ENCODE measurements at regions of chr6 and their contacts with region 1.

Region 1: DNA sequence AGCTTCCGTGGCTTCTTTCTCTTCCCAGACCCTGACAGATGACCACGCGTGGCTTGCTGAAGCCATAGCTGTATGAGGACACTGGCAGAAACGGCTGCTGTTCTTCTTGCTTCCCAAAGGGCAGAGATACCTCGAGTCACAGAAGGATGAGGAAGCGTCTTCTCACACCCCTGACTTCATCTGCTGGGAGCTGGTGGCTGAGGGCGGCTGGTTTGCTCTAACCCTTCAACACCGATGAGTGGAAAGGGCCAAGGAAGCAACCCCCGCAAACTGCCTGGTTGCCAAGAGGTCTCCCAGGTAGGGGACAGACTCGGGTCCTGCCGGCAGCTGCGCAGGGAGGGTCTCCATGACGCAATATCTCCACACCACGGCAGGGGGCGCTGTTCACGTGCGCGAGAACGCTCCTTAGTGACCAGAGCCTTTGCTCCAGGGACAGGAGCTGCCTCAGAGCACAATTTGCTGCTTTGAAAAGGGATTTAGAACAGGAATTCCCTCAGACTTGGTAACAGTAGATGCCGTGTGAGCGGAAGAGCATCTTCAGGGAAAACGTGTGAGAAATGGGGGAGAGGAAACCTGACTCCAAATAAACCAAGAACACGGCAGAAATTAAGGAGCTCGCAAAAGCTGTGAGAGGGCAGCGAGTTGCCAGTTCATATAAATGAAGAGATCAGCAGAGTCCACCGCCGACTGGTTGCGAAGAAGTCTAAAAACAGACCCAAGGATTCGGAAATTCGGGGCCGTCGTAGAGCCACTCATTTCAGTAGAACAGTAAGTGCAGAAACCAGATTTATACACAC is 80.2 kb downstream of the ERMARD start:
- DNase-seq: no peak
- H3K4me3 ChIP-seq: no peak overlapping the region
- CTCF ChIP-seq: peak; percentile 94

Region 2: DNA sequence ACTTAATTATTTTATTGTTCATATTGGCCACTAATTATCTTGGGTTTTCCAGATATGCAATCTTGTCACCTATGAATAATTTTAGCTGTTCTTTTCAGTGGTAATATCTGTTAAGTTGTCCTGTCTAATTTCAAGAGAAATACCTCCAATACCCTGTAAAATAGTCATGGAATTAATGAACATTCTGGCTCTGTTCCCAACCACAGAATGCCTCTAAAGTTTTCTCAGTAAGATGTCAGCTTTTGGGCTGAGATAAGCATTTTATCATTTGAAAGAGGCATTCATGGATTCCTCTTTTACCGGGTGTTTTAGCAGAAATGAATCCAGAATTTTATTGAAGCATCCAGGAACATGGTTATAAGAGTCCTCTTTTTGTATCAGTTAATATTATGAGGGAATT is 239.1 kb before region 1 on chr6:
- CTCF ChIA-PET with region 1: no interaction called
- POLR2A ChIA-PET with region 1: no interaction called
- DNase-seq: peak; percentile 42
- H3K4me3 ChIP-seq: no peak overlapping the region
- CTCF ChIP-seq: no peak

Region 3: GRCh38 chr6:169800668-169801395 is 30.8 kb before region 1 on chr6:
- CTCF ChIA-PET with region 1: interaction called, 13 read pairs
- POLR2A ChIA-PET with region 1: no interaction called
- DNase-seq: no peak
- H3K4me3 ChIP-seq: no peak overlapping the region
- CTCF ChIP-seq: no peak

Region 4: GRCh38 chr6:170510631-170511030 is 679.0 kb after region 1 on chr6:
- CTCF ChIA-PET with region 1: interaction called, 110 read pairs
- POLR2A ChIA-PET with region 1: no interaction called
- DNase-seq: no peak
- H3K4me3 ChIP-seq: no peak overlapping the region
- CTCF ChIP-seq: no peak

Region 5: DNA sequence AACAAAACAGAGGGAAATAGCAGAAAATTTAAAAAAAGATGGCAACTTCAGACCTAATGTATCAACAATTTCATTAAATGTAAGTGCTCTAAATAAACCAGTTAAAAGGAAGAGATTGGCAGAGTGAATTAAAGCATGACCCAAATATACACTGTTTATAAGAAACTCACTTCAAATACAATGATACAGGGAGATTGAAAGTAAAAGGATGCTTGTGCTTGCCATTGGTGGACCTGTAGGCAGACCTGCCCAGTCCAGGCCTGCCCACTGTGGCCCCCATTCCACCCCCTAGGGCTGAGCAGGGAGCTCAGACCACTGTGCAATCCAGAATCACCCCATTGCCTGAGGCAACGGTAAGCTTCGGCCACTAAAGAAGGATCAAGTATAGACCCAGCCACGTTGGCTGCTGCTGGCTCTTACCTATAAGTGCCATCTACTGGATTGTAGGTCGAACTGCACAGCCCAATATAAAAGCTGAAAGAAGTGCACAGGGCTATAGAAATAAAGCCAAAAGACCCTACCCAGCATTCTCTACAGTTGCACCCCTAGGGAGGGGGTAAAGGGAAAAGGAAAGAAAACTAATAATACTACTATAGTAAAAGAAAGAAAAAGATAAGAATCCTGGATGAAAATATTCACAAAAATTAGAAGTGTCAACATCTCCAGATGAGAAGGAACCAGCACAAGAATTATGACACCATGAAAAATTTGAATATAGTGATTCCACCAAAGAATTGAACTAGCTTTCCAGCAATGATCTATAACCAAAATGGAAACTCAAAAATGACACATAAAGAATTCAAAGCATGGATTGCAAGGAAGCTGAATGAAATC is 685.4 kb after region 1 on chr6:
- CTCF ChIA-PET with region 1: interaction called, 110 read pairs
- POLR2A ChIA-PET with region 1: no interaction called
- DNase-seq: peak; percentile 31
- H3K4me3 ChIP-seq: no peak overlapping the region
- CTCF ChIP-seq: peak; percentile 73

Region 6: GRCh38 chr6:170522565-170523183 is 691.0 kb after region 1 on chr6:
- CTCF ChIA-PET with region 1: interaction called, 153 read pairs
- POLR2A ChIA-PET with region 1: no interaction called
- DNase-seq: no peak
- H3K4me3 ChIP-seq: no peak overlapping the region
- CTCF ChIP-seq: peak; percentile 48

Region 7: GRCh38 chr6:170529839-170530469 is 698.3 kb after region 1 on chr6:
- CTCF ChIA-PET with region 1: interaction called, 153 read pairs
- POLR2A ChIA-PET with region 1: no interaction called
- DNase-seq: no peak
- H3K4me3 ChIP-seq: no peak overlapping the region
- CTCF ChIP-seq: peak; percentile 87